ENCODE measurements at regions of chr15 and their contacts with region 1.

Region 1: DNA sequence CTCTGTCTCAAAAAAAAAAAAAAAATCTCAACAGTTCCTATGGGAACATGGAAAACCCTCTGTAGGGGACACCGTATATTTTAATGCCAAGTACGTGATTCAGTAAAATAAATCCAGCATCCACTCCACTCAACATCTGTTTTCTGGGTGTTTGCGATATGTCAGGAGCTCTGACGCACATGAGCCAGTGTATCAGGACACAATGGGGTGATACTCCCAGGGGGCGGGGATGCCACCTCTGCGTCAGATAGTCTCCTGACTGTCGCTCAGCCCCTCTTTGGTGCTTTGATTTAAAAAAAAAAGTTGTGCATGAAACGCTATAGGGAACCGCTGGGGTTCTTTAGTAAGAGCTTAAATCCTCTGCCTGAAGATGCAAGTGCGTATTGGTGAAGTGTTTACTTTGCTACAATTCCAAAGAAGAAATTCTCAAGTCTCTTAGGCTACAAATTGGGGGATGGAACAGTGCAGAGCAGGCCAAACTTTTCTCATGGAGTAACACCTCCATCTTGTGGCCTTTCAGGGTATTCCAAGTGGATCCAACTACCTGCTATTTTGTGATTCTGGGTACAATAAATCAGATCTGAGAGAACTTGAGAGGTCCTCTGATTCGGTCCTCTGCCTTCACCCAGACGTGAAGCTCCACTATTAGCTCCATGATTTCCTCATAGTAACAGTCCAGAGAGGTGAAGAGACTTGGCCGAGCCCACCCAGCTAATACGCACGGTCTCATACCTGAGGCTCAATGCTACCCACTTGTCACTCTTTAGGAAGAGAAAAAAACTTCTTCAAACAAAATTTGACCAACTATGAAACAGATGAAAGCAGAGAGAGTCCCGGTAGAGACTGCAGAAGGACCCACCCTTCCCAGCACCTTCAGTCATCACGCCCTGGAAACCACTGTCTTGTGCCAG is 9.3 kb upstream of the NR2E3 start:
- DNase-seq: peak; percentile 77
- H3K4me3 ChIP-seq: no peak overlapping the region
- H3K27ac ChIP-seq: no peak overlapping the region
- H3K4me1 ChIP-seq: no peaks in the 10 kb centered on the region
- H3K27me3 ChIP-seq: no peaks in the 10 kb centered on the region
- CTCF ChIP-seq: peak; percentile 71 to 81
- POLR2A ChIP-seq: no peak

Region 2: DNA sequence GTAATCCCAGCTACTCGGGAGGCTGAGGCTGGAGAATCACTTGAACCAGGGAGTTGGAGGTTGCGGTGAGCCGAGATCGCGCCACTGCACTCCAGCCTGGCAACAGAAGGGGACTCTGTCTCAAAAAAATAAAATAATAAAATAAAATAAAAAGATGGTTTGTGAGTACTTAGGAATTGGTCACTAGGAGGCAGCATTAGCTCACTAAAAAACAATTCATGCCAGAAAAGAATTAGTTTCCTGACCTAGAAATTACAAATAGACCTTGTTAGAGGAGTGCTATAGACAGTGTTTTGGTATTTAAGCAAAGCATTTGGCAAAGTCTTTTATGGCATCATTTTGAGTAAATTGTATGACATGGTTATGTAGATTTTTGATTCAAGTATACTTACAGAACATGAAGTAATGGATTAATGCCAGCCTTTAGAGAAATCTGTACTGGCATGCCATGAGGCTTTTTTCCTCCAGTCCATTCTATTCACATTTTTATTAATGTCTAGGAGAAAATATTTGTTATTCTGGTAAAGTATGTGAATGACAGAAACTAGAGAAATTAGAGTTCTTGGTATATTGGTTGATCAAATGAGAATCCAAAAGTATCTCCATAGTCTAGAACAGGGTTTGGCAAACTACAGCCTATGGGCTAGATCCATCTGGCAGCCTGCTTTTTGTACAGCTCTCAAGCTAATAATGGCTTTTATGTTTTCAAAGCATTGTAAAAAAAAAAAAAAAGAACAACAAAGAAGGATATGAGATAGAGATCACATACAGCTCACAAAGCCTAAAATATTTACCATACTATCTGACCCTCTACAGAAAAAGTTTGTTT is 826.9 kb before region 1 on chr15:
- CTCF ChIA-PET with region 1: interaction called, 5 read pairs
- POLR2A ChIA-PET with region 1: no interaction called
- dilution Hi-C with region 1: no loop called
- intact Hi-C with region 1: loop called (anchors 2 kb)
- DNase-seq: peak; percentile 66
- H3K4me3 ChIP-seq: no peak overlapping the region
- H3K27ac ChIP-seq: no peak overlapping the region
- H3K4me1 ChIP-seq: no peaks in the 10 kb centered on the region
- H3K27me3 ChIP-seq: no peaks in the 10 kb centered on the region
- CTCF ChIP-seq: peak in 1 of 2 donors; percentile 38
- POLR2A ChIP-seq: no peak

Region 3: GRCh38 chr15:71448688-71449114 is 352.4 kb before region 1 on chr15:
- CTCF ChIA-PET with region 1: interaction called, 7 read pairs
- POLR2A ChIA-PET with region 1: interaction called, 6 read pairs
- dilution Hi-C with region 1: no loop called
- intact Hi-C with region 1: loop called (anchors 1 kb)
- DNase-seq: peak; percentile 87
- H3K4me3 ChIP-seq: no peak overlapping the region
- H3K27ac ChIP-seq: no peak overlapping the region
- H3K4me1 ChIP-seq: peaks cover 21% of the 10 kb centered on the region
- H3K27me3 ChIP-seq: no peaks in the 10 kb centered on the region
- CTCF ChIP-seq: peak; percentile 73 to 87
- POLR2A ChIP-seq: no peak

Region 4: DNA sequence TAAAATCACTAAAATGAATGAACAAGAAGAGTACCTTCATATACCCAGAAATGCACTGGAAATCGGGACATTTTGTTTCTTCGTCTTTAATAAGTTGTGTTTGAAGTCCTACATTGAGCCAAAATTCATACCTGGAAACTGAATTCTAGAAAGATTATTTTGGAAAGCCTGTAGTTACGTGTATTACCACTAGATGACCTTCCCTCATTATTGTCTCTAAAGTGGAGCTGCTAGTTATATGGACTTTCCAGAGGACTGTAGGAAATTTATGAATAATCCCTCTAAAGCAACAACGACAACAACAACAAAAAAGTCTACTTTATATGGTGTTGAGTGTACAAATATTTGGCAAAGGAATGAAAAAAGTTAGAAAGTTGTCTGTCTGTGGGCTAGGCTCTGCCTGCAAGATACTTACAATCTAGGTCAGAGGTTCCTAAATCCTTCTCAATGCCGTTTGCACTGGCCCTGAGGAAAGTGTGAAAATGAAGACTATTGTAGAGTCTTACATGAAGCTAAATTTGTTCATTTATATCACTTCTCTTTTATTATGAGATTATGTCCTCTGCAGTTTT is 225.5 kb before region 1 on chr15:
- CTCF ChIA-PET with region 1: interaction called, 3 read pairs
- POLR2A ChIA-PET with region 1: no interaction called
- dilution Hi-C with region 1: no loop called
- intact Hi-C with region 1: loop called (anchors 5 kb)
- DNase-seq: peak; percentile 24
- H3K4me3 ChIP-seq: no peak overlapping the region
- H3K27ac ChIP-seq: no peak overlapping the region
- H3K4me1 ChIP-seq: peaks cover 12% of the 10 kb centered on the region
- H3K27me3 ChIP-seq: no peaks in the 10 kb centered on the region
- CTCF ChIP-seq: peak; percentile 25 to 36
- POLR2A ChIP-seq: no peak

Region 5: GRCh38 chr15:71743861-71744382 is 57.2 kb before region 1 on chr15:
- CTCF ChIA-PET with region 1: interaction called, 125 read pairs
- POLR2A ChIA-PET with region 1: no interaction called
- dilution Hi-C with region 1: no loop called
- intact Hi-C with region 1: loop called (anchors 1 kb)
- DNase-seq: peak; percentile 53
- H3K4me3 ChIP-seq: no peak overlapping the region
- H3K27ac ChIP-seq: no peak overlapping the region
- H3K4me1 ChIP-seq: peaks cover 19% of the 10 kb centered on the region
- H3K27me3 ChIP-seq: no peaks in the 10 kb centered on the region
- CTCF ChIP-seq: peak; percentile 55 to 59
- POLR2A ChIP-seq: no peak

Region 6: DNA sequence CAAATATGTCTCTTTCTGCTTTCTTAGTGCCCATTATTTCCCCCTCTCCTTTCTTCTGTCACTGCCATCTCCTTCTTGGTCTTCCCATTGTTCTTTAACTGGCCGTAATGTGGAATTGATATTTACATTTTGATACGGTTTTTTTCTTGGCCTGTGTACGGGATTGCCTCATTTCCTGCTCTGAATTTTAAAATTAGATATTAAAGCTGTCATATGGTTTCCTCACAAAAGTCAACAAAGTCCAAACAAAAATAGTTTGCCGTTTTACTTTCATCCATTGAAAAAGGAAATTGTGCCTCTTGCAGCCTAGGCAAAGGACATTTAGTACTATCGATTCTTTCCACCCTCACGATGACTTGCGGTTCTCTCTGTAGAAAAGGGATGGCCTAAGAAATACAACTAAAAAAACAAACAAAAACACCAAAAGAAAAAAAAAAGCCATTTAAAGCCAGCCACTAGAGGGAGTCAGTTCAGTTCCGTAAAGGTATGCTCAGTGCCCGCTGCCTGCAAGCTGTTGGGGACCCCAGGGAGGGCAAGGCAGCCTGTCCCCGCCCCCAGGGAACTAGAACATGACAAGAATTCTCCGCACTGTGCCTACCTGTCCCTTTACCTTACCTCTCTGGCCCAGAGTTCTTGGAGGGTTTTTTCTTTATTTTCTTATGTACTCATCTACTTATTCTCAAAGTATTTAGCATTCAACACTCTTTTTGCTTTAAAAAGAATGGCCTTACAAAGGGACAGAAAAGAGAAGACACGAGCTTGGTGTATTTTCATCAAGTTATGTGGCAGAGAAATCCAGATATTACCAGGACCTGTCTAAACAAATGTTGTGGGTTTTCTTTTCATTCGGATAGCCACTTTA is 20.7 kb before region 1 on chr15:
- CTCF ChIA-PET with region 1: interaction called, 25 read pairs
- POLR2A ChIA-PET with region 1: no interaction called
- dilution Hi-C with region 1: no loop called
- intact Hi-C with region 1: loop called (anchors 1 kb)
- DNase-seq: peak; percentile 84
- H3K4me3 ChIP-seq: peak overlapping the region in 1 of 3 experiments; percentile 51
- H3K27ac ChIP-seq: peak overlapping the region; percentile 86
- H3K4me1 ChIP-seq: peaks cover 19% of the 10 kb centered on the region
- H3K27me3 ChIP-seq: no peaks in the 10 kb centered on the region
- CTCF ChIP-seq: peak; percentile 76 to 77
- POLR2A ChIP-seq: no peak